Left ventricle myocardium superior (tissue), 1 donor: ENCODE measurements at regions of chr22 and their contacts with region 1.

Region 1: DNA sequence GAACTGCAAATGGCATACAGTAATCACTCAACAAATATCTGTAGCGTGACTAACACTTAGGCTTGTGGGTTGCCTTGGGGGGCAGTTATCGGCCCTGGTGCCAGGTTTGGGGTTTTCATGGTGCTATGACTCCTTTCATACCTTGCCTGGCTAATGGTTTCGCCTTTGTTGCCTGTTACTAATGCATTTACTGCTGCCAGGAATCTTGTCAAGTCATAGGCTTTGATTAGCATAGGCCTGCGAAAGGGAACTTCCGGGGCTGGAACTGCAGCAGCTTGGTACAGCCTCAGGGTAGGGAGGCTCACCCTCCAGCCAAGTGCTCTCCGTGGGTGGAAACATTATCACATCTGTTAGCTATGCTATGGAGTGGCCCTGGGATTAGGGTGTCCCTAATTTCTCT is 13.2 kb downstream of the SLC25A18 start:
- DNase-seq: no peak
- ATAC-seq: peak; percentile 48

Region 2: GRCh38 chr22:17396549-17396948 is 179.9 kb before region 1 on chr22:
- intact Hi-C with region 1: no loop called
- DNase-seq: no peak
- ATAC-seq: no peak

Region 3: DNA sequence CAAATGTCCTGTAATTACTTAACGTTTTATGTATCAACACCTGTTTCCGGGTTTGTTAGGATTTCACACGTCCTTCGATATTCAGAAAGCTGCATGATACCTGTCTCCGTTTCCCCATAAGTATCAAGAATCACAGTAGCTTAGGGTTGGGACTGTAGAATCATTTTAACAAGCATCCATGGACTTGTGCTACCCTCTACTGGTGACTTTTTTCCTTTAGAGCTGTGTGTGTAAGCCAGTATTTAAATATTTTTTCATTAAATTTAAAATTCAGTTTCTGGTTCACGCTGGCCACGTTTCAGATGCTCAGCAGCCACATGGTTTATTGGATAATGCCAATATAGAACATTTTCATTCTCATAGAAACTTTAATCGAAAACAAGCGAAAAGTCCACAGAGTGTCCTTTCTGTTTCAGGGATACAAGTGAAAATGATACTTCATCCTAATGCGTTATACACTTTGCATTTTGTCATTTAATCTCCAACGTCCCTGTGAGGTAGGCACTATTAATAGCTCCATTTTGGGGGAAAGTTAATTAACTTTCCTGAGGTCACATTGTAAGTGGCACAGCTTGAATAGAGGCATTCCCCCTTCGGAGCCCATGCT is 74.7 kb before region 1 on chr22:
- intact Hi-C with region 1: no loop called
- DNase-seq: no peak
- ATAC-seq: peak; percentile 87

Region 4: GRCh38 chr22:17628304-17629166 is 52.1 kb after region 1 on chr22 and contains the start of gene ATP6V1E1:
- intact Hi-C with region 1: loop called (anchors 5 kb)
- DNase-seq: peak; percentile 97
- ATAC-seq: peak; percentile 100
- total RNA-seq, gene ATP6V1E1: 210 TPM

Region 5: GRCh38 chr22:17867160-17867785 is 290.8 kb after region 1 on chr22:
- intact Hi-C with region 1: no loop called
- DNase-seq: peak; percentile 84
- ATAC-seq: peak; percentile 81